Esophagus squamous epithelium (tissue), 5 donors: ENCODE measurements at regions of chr4 and their contacts with region 1.

Region 1: GRCh38 chr4:39375478-39375877 is 9.3 kb upstream of the RFC1 start:
- DNase-seq: no peak
- H3K4me3 ChIP-seq: no peak overlapping the region
- H3K27ac ChIP-seq: no peak overlapping the region
- H3K4me1 ChIP-seq: no peaks in the 10 kb centered on the region
- H3K27me3 ChIP-seq: peaks cover 0 to 4% (median 0%) of the 10 kb centered on the region in 4 donors
- CTCF ChIP-seq: no peak
- POLR2A ChIP-seq: no peak

Region 2: DNA sequence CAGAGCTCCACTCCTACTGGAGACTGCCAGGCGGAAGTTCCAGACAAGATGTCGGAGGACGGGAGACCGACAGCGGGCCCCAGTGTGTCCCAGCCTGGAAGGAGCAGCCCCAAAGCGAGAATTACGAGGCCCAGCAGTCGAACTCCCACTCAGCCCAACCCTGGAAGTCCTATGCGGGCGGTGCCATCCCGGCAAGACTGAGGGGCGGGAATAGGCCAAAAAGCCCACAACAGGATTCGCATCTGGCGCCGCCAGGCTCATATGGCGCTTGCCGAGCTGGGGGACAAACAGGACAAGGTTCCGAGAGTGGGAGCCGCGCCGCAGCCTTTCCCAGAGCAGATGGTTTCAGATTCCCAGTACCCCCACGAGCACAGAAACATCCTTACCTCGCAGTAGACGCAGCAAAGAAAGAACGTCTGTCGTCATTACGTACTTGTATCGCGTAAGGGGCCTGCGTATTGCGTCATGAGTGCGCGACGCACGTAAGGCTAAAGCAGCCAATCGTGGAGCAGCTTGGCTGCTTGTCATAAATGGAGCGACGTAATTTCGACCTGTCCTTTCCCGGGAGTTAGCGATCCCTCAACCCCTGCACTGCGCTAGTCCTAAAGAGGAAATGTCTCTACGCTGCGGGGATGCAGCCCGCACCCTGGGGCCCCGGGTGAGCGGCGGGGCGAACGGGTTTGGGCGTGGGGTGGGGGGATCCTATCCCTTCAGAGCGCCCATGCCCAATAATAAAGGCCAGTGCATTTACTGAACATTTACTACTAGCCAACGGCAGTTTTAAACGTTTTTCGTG is 83.2 kb after region 1 on chr4 and contains the starts of genes LIAS and RPL9:
- intact Hi-C with region 1: loop called (anchors 10 kb)
- DNase-seq: peak; percentile 74
- H3K4me3 ChIP-seq: peak within 1 kb of the TSS; percentile 56 to 80 (median 72)
- H3K27ac ChIP-seq: peak within 1 kb of the TSS; percentile 93 to 98 (median 97)
- H3K4me1 ChIP-seq: peaks cover 8 to 43% (median 25%) of the 10 kb centered on the region in 3 donors
- H3K27me3 ChIP-seq: no peaks in the 10 kb centered on the region
- CTCF ChIP-seq: no peak
- POLR2A ChIP-seq: peak in 3 of 4 donors; percentile 91 to 94 (median 94)
- total RNA-seq, gene LIAS: 9.1 to 17.8 (median 13.1) TPM
- total RNA-seq, gene RPL9: 2,242 to 7,905 (median 4,182) TPM